ENCODE measurements at regions of chr2 and their contacts with region 1.

Region 1: DNA sequence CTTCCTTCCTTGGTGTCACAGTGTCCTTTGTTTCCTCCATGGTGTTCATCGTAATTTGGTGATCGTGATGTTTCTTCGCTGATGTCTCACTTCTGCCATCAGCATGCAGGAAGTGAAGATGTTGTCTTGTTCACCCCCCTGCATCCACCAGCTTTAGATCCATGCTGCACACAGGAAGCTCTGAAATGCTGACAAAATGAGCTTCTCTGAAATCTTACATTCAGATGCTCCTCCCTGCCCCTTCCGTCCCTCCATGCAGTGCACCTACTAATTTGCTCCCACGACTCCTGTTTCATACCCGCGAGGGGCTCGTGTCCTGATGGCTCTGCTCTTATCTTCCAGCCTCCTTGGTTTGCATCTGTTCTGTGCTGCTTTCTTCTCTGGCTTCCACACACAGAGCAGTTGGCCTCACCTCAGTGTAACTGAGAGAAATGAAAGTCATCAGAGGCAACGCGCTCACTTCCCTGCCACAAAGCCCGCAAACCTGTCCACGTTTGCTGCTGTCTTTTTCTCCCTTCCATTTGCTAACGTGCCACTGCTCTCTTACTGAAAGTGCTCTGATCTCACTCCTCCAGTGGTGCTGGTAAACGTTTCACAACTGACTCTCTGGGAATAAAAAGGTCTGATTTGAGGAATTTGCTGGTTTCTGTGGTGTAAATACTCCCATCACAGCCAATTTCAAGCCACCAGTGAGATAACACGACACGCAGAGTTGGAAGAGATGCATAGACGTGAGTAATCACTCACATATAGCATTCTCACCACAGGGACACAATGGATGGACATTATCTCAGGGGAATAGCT is 41.0 kb upstream of the MGAT4A start:
- DNase-seq: peak; percentile 91
- H3K4me3 Mint-ChIP-seq: peak overlapping the region; percentile 81
- H3K27ac Mint-ChIP-seq: peak overlapping the region; percentile 95
- H3K4me1 Mint-ChIP-seq: peaks cover 63% of the 10 kb centered on the region
- H3K27me3 Mint-ChIP-seq: no peaks in the 10 kb centered on the region

Region 2: DNA sequence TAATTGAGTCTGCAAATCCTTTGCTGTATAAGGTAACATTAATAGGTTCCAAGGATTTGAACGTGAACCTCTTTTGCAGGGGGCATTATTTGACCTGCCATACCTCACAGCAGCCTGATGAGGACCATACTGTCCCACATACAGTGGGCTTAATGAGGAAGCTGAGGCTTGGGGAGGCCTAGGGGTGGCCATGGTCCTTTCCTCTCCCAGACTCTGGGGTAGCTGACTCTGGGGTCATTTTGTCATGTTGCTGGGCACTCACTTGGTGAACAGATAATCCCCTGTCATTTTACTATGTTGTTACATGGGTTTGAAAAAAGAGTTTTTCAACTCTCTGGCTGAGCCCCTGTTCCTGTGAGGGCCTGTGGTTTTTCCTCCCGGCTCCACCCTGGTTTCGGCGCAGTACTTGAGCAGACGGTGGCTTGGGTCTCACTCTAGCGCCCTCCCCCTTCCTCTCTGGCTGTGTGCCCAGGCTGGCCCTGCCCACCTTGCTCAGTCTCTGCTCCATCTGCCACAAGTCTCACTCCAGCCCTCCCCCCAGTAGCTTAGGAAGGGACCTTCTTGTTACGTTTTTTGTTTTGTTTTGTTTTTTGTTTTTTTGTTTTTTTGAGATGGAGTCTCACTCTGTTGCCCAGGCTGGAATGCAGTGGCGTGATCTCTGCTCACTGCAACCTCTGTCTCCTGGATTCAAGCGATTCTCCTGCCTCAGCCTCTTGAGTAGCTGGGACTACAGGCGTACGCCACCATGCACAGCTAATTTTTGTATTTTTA is 306.3 kb before region 1 on chr2:
- intact Hi-C with region 1: loop called (anchors 5 kb)
- DNase-seq: peak; percentile 93
- H3K4me3 Mint-ChIP-seq: peak overlapping the region; percentile 71
- H3K27ac Mint-ChIP-seq: peak overlapping the region; percentile 89
- H3K4me1 Mint-ChIP-seq: peaks cover 76% of the 10 kb centered on the region
- H3K27me3 Mint-ChIP-seq: no peaks in the 10 kb centered on the region

Region 3: DNA sequence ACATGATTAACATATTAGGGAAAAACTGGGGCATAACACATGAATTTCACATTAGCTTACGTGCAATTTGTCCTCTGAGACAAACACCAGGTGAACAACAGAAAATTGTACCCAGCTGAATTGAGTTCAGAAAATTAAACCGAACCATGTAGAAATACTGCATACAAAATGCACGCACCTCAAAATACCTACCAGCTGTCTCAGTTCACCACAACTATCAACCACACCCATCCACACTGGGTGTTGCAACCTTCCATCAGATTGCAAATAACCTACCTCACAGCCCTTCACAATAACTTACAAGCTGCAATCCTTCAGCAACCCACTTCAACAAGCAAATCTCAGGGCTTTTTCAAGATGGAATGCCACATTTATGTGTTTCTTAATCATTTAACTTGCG is 107.6 kb before region 1 on chr2:
- intact Hi-C with region 1: loop called (anchors 2 kb)
- DNase-seq: peak; percentile 88
- H3K4me3 Mint-ChIP-seq: peak overlapping the region; percentile 39
- H3K27ac Mint-ChIP-seq: peak overlapping the region; percentile 100
- H3K4me1 Mint-ChIP-seq: peaks cover 59% of the 10 kb centered on the region
- H3K27me3 Mint-ChIP-seq: no peaks in the 10 kb centered on the region

Region 4: DNA sequence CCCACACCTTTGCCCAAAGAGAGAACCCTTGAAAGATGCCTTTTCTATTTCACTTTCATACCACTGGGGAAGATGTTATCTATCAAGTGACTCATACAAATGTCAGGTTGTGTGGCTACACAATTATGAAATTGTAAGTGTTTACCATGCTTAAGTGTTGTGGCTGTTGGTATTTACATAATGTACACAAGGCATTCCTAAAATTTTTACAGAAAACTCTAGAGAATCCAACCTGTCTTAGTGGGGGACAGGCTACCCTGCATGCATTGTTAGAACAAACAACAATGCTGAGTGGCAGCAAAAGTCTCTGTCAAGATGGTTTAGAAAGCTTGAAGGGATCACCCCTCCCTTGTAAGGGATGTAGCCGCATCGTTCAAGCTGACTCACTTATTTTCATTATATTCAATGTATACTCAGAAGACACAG is 35.4 kb before region 1 on chr2:
- intact Hi-C with region 1: loop called (anchors 1 kb)
- DNase-seq: peak; percentile 81
- H3K4me3 Mint-ChIP-seq: peak overlapping the region; percentile 69
- H3K27ac Mint-ChIP-seq: peak overlapping the region; percentile 80
- H3K4me1 Mint-ChIP-seq: peaks cover 58% of the 10 kb centered on the region
- H3K27me3 Mint-ChIP-seq: no peaks in the 10 kb centered on the region

Region 5: GRCh38 chr2:98805412-98806171 is 33.7 kb after region 1 on chr2:
- intact Hi-C with region 1: loop called (anchors 5 kb)
- DNase-seq: no peak
- H3K4me3 Mint-ChIP-seq: no peak overlapping the region
- H3K27ac Mint-ChIP-seq: no peak overlapping the region
- H3K4me1 Mint-ChIP-seq: peaks cover 16% of the 10 kb centered on the region
- H3K27me3 Mint-ChIP-seq: peaks cover 8% of the 10 kb centered on the region